Heart left ventricle (tissue), 16 donors: ENCODE measurements at regions of chr2 and their contacts with region 1.

Region 1: GRCh38 chr2:109604597-109604996 is 9.2 kb downstream of the SEPTIN10 start:
- DNase-seq: peak in 2 of 5 donors; percentile 39 to 59
- ATAC-seq: peak in 3 of 4 donors; percentile 46 to 89 (median 84)
- H3K4me3 ChIP-seq: no peak overlapping the region
- H3K27ac ChIP-seq: no peak overlapping the region
- H3K4me1 ChIP-seq: peaks cover 0 to 54% (median 20%) of the 10 kb centered on the region in 12 donors
- H3K27me3 ChIP-seq: peaks cover 0 to 13% (median 0%) of the 10 kb centered on the region in 9 donors
- CTCF ChIP-seq: no peak
- POLR2A ChIP-seq: no peak

Region 2: DNA sequence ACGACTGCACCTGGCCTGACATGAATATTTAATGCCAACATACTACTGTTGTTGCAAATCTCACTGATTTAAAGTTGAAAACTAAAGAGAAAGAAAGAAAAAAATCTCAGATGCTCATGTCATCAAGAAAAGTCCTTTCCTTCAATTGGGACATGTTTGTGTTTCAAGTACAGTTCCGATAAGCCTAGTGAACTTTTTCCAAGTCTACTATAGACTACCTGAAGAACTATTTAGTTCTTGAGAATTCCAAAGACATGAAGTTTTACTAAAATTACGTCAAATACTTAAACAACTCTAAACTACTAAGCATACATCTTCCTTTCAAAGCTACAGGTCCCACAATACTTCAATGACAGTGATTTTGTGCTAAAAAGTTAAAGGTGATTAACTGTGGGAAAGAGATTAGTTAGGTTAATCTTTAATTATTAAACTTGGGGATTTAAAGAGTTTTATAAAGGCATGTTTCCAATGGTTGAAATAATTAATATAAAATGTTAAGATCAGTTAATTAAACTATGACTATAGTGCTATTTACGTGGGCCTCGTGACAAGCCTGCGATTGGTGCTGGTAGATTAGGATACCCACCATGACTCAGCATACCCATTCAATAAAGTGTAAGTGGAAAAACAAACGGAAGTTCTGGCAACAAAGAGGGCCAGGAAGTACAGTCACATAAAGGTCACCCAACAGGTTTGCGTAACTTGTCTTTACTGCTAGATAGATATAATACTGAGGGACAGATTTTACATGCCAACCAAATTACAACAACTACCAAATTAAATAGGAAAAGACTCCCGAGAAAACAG is 46.3 kb before region 1 on chr2:
- intact Hi-C with region 1: loop called in 2 of 10 experiments (anchors 10 kb)
- DNase-seq: no peak
- ATAC-seq: peak in 3 of 4 donors; percentile 65 to 84 (median 80)
- H3K4me3 ChIP-seq: no peak overlapping the region
- H3K27ac ChIP-seq: peak overlapping the region in 2 of 12 donors; percentile 16 to 28
- H3K4me1 ChIP-seq: peaks cover 0 to 7% (median 0%) of the 10 kb centered on the region in 12 donors
- H3K27me3 ChIP-seq: no peaks in the 10 kb centered on the region
- CTCF ChIP-seq: no peak
- POLR2A ChIP-seq: no peak

Region 3: DNA sequence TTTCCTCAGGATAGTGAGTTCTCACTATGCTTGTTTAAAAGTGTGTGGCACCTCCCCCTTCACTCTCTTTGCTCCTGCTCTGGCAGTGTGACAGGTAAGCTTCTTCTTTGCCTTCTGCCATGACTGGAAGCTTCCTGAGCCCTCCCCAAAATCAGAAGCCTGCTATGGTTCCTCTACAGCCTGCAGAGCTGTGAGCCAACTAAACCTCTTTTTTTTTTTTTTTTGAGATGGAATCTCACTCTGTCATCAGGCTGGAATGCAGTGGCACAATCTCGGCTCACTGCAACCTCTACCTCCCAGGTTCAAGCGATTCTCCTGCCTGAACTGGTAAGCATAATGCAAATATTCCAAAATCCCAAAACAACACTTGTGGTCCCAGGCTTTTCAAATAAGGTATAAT is 89.6 kb after region 1 on chr2:
- intact Hi-C with region 1: no loop called
- DNase-seq: no peak
- ATAC-seq: no peak
- H3K4me3 ChIP-seq: no peak overlapping the region
- H3K27ac ChIP-seq: peak overlapping the region in 1 of 12 donors; percentile 86
- H3K4me1 ChIP-seq: peaks cover 0 to 36% (median 17%) of the 10 kb centered on the region in 12 donors
- H3K27me3 ChIP-seq: no peaks in the 10 kb centered on the region
- CTCF ChIP-seq: no peak
- POLR2A ChIP-seq: no peak